ENCODE measurements at regions of chr12 and their contacts with region 1.

Region 1: GRCh38 chr12:107760809-107761501 is at the start of gene PRDM4:
- DNase-seq: peak; percentile 92
- H3K4me3 Mint-ChIP-seq: peak within 1 kb of the TSS; percentile 93
- H3K27ac Mint-ChIP-seq: peak within 1 kb of the TSS; percentile 83
- H3K4me1 Mint-ChIP-seq: peaks cover 24% of the 10 kb centered on the region
- H3K27me3 Mint-ChIP-seq: no peaks in the 10 kb centered on the region
- total RNA-seq, gene PRDM4: 18.8 to 20.6 TPM

Region 2: DNA sequence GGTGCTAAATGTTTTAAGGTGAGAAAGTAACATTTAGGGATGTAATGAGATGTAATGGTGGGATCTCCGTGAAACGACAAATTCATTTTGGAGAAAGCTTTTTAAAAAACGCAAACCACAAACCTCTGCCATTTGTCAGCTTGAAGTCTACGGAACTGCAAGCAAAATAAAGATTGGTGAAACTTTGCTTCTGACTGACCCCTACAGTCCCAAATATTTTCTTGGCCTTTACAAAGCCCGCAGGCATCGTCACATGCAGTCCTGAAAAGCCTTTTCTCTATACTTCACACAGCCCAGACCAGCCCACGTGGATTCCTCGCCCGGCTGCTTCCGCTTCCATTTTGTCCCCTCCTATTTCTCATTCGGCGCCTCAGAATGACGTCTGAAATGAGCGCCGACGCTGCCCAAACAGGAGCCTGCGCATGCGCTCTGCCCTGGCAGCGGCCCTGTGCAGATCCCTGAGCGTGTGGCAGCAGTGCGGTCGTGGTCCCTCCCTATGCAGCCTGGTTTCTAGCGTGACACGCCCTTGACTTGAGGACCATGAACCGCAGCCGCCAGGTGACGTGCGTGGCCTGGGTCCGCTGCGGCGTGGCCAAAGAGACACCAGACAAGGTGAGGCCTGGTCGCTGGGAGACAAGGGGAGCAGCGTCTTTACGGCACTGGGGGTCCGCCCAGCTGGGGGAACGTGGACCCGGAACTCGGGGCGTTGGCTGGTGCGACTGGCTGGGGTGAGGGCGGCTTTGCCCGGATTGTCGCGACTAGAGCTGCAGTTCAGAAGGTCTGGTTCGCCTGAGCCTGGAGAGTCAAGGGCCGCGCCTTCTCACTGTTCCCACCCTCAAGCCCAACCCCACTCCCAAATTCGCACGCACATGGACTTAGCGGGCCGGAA is 75.4 kb before region 1 on chr12 and contains the start of gene PWP1:
- CTCF ChIA-PET with region 1: interaction called, 3 read pairs
- intact Hi-C with region 1: loop called (anchors 1 kb)
- DNase-seq: peak; percentile 95
- H3K4me3 Mint-ChIP-seq: peak within 1 kb of the TSS; percentile 90
- H3K27ac Mint-ChIP-seq: peak within 1 kb of the TSS; percentile 95
- H3K4me1 Mint-ChIP-seq: peaks cover 20% of the 10 kb centered on the region
- H3K27me3 Mint-ChIP-seq: no peaks in the 10 kb centered on the region
- total RNA-seq, gene PWP1: 35.0 to 37.1 TPM

Region 3: DNA sequence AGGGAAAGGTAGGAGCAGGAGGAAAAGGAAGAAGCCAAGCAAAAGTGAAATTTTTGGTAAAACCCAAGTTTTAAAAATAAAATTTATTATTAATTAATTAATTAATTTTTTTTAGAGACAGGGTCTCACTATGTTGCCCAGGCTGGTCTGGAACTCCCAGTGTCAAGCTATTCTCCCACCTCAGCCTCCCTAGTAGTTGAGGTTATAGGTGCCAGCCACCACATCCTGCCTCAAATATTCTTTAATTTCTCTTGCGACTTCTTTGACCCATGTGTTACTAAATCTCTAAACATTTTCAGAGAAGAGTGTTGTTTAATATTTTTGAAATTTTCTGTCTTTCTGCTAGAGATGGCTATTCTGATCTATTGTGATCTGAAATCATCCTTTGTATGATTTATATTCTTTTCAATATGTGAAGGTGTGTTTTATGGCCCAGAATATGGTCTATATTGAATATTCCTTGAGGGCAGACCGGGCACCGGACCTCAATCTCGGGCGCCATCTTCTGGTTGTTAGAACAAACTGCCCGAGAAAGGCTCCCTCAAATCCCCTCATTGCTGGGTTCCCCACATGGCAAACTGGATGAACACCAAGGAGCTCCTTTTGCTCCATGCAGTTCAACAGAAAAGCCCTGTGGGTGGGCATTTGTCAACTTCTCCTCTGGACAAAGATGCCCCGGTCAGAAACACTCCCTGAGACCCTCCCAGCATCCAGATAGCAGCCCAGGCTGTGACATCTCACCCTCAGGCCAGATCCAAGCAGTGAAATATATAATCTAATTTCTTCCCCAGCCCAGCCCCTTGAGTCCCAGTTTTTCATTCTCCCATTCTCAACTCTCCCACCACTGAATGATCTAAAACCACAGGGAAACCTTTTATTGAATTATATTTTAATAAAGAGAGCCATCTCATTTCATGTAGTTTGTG is 124.1 kb after region 1 on chr12:
- CTCF ChIA-PET with region 1: interaction called, 5 read pairs
- intact Hi-C with region 1: loop called (anchors 1 kb)
- DNase-seq: peak; percentile 64
- H3K4me3 Mint-ChIP-seq: no peak overlapping the region
- H3K27ac Mint-ChIP-seq: no peak overlapping the region
- H3K4me1 Mint-ChIP-seq: no peaks in the 10 kb centered on the region
- H3K27me3 Mint-ChIP-seq: peaks cover 16% of the 10 kb centered on the region

Region 4: GRCh38 chr12:107912421-107913004 is 151.6 kb after region 1 on chr12:
- CTCF ChIA-PET with region 1: no interaction called
- intact Hi-C with region 1: loop called (anchors 2 kb)
- DNase-seq: peak; percentile 75
- H3K4me3 Mint-ChIP-seq: peak overlapping the region; percentile 70
- H3K27ac Mint-ChIP-seq: no peak overlapping the region
- H3K4me1 Mint-ChIP-seq: peaks cover 2% of the 10 kb centered on the region
- H3K27me3 Mint-ChIP-seq: peaks cover 27% of the 10 kb centered on the region

Region 5: GRCh38 chr12:108856428-108857157 is 1095.6 kb after region 1 on chr12:
- CTCF ChIA-PET with region 1: no interaction called
- intact Hi-C with region 1: loop called (anchors 10 kb)
- DNase-seq: peak; percentile 74
- H3K4me3 Mint-ChIP-seq: peak overlapping the region; percentile 92
- H3K27ac Mint-ChIP-seq: peak overlapping the region; percentile 75
- H3K4me1 Mint-ChIP-seq: peaks cover 40% of the 10 kb centered on the region
- H3K27me3 Mint-ChIP-seq: no peaks in the 10 kb centered on the region